Dendritic cell treated with granulocyte-macrophage colony-stimulating factor and Interleukin-4, amounts not matched to agents 40 ng/mL and 50 ng/mL, for 4 days (primary cell): ENCODE measurements at regions of chr4 and their contacts with region 1.

Region 1: DNA sequence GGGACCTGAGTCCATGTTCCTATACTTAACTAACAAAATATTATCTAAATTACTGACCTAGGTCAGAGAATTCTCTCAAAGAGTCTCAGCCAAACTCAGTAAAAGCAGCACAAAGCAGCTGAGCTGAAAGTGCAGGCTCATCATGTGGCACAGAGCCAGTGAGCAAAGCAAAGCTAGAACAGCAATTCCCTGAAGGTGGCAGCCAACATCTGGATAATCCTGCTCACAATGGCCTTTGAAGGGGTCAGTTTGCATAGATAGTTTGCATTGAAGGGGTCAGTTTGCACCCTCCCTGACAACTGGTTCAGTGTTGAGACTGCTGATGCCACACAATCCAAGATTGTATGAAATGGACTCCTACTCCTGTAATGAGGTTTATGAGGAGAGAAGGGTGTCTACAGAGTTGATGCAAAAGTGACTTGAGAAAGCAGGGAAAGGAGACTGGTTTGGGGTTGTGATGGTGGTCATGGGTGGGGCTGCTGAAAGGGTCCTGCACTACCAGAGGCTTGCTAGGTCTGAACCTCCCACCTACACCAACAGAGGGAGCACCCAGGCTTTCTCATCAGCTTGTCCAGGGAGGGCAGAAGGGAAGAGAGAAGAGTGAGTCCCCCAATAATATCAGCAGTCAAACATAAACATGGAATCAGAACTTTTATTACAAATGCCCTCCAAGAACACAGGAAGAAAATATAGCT is 39.7 kb downstream of the TRIM61 start:
- H3K4me3 Mint-ChIP-seq: no peak overlapping the region
- H3K27ac Mint-ChIP-seq: no peak overlapping the region
- H3K4me1 Mint-ChIP-seq: no peaks in the 10 kb centered on the region
- H3K27me3 Mint-ChIP-seq: peaks cover 2% of the 10 kb centered on the region

Region 2: DNA sequence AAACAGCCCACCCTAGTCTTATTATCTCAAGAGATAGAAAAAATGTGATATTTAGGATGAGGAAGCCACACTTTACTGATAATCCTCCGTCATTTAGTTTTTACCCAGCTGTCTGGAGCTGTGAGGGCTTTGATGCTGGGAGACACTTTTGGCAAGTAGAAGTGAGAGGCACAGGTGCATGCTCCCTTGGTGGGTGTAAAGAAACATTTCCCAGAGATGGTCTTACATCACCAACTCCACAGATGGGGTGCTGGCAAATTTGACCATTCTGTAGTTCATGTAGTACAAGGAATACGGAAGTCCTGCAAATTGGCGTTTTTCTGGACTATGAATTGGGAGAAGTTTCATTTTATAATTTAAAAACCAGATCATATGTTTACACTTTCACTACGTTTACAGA is 11.3 kb after region 1 on chr4:
- intact Hi-C with region 1: loop called (anchors 1 kb)
- H3K4me3 Mint-ChIP-seq: no peak overlapping the region
- H3K27ac Mint-ChIP-seq: no peak overlapping the region
- H3K4me1 Mint-ChIP-seq: no peaks in the 10 kb centered on the region
- H3K27me3 Mint-ChIP-seq: peaks cover 9% of the 10 kb centered on the region

Region 3: DNA sequence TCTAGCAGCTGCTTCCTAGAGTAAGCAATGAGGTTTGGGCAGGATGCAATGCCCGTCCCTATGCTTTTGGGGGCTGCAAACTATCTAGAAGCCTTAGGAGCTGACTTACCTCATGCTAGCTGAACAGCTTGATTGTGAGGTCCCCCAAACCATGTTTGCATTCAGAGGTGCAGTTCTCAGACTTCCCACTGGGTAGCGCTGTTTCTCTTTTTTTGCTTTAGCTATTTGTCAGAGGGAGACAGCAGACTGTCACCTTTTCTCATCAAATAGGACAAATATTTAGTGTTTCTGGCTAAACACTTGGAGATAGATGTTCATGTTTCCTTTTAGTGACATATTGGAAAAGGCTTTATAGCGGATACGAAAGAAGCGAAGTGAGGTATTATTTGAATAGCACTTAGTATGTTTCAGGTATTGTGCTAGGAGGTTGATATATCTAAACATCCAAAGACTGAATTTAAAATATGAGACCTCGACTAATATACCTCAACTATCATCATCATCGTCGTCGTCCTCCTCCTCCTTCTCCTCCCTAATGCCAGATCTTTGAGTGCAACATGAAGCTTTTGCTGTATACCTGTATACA is 193.6 kb after region 1 on chr4:
- intact Hi-C with region 1: no loop called
- H3K4me3 Mint-ChIP-seq: no peak overlapping the region
- H3K27ac Mint-ChIP-seq: no peak overlapping the region
- H3K4me1 Mint-ChIP-seq: peaks cover 25% of the 10 kb centered on the region
- H3K27me3 Mint-ChIP-seq: no peaks in the 10 kb centered on the region